AG04450 (cell line): ENCODE measurements at regions of chr12 and their contacts with region 1.

Region 1: DNA sequence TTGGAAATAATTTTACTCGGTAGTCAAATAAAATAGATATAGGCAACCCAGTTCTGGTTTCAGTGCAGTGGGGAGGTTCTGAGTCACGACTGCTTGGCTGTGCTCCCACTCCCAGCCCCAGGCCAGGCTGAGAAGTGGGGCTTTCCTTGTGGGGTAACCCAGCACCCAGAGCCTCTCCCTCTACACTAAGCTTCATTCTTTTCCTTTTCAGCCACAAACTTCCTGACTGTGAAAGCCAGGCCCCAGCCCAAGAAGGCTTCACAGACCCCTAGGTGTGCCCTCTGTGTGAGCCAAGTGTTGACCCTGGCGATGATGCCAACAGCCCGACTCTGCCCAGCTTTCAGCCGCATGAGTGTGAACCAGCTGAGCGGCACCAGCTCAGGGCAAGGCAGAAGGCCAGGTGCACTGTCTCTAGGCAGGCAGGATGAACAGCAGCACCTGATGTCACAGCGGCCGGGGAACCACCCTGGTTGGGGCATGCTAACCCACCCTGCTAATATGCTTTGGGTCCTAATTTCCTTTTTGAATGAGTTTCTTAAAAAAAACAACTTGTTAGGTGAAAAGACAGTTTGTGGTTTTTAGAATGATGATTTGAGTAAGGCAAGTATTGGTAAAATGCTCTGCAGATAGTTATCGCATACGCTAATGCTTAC is 42.2 kb upstream of the ATP23 start:
- DNase-seq: peak; percentile 51
- H3K4me3 ChIP-seq: no peak overlapping the region
- H3K27ac ChIP-seq: peak overlapping the region; percentile 92
- H3K27me3 ChIP-seq: no peaks in the 10 kb centered on the region
- CTCF ChIP-seq: no peak

Region 2: DNA sequence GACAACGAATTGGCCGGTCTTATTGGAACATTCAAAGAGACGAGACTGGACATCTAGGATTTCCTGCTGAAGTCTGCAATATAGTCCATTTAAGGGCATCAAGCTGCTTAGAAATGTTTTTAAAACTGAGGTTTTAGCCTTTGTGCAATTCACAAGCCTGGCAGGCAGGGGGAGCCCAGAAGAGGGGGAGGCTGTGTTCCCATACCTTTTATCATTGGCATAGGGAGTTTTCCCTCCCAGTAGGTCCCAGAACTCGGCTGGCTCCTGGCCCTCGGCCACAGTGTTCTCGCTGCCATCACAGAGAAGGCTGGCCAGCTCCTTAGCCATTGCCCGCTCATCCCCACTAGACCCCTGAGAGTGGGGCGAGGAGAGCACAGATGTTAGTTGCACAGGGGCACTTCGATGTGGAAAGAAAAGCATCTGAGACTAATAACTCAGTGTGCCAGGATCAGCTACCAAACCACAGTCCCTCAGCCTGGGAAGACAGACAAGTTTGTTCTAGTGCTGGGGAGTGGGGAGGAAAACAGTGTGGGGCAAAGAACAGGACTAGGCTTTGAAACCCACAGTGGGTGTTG is 95.7 kb before region 1 on chr12:
- CTCF ChIA-PET with region 1: interaction called, 124 read pairs
- POLR2A ChIA-PET with region 1: interaction called, 3 read pairs
- DNase-seq: no peak
- H3K4me3 ChIP-seq: no peak overlapping the region
- H3K27ac ChIP-seq: no peak overlapping the region
- H3K27me3 ChIP-seq: no peaks in the 10 kb centered on the region
- CTCF ChIP-seq: peak; percentile 86

Region 3: GRCh38 chr12:57836442-57837375 is 62.4 kb before region 1 on chr12:
- CTCF ChIA-PET with region 1: interaction called, 44 read pairs
- POLR2A ChIA-PET with region 1: interaction called, 19 read pairs
- DNase-seq: peak; percentile 46
- H3K4me3 ChIP-seq: peak overlapping the region; percentile 45
- H3K27ac ChIP-seq: peak overlapping the region; percentile 48
- H3K27me3 ChIP-seq: no peaks in the 10 kb centered on the region
- CTCF ChIP-seq: no peak

Region 4: DNA sequence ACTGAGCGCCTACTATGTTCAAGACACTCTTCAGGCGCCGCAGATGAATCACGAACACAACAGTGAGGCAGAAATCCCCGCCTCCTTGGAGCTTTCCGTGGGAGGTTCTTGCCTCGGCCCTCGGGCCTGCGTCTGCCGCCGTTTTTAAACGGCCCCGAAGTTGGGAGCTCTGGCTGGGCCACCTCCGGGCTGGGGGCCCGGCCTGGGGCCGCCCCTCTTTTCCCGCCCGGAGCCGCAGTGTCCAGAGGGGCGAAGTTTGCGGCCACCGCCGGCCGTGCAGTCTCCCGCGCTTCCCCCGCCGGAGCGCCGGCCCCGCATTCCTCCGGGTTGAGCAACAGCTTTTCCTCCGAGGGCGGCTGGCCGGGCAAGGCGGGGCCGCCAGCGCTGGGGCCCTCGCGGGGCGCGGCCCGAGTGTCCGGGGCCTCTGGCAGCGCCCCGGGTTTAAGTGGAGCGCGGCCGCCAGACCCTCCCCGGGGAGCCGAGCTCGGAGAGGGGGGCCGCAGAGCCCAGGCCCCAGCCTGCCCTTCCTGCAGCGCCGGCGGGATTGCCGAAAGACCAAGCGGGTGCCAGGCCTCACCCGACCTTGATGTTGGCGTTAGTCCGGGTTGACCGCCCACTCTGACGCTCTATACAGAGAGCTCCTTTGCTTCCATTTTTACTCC is 33.9 kb before region 1 on chr12:
- CTCF ChIA-PET with region 1: interaction called, 9 read pairs
- POLR2A ChIA-PET with region 1: interaction called, 63 read pairs
- DNase-seq: no peak
- H3K4me3 ChIP-seq: peak overlapping the region; percentile 55
- H3K27ac ChIP-seq: peak overlapping the region; percentile 90
- H3K27me3 ChIP-seq: no peaks in the 10 kb centered on the region
- CTCF ChIP-seq: no peak

Region 5: DNA sequence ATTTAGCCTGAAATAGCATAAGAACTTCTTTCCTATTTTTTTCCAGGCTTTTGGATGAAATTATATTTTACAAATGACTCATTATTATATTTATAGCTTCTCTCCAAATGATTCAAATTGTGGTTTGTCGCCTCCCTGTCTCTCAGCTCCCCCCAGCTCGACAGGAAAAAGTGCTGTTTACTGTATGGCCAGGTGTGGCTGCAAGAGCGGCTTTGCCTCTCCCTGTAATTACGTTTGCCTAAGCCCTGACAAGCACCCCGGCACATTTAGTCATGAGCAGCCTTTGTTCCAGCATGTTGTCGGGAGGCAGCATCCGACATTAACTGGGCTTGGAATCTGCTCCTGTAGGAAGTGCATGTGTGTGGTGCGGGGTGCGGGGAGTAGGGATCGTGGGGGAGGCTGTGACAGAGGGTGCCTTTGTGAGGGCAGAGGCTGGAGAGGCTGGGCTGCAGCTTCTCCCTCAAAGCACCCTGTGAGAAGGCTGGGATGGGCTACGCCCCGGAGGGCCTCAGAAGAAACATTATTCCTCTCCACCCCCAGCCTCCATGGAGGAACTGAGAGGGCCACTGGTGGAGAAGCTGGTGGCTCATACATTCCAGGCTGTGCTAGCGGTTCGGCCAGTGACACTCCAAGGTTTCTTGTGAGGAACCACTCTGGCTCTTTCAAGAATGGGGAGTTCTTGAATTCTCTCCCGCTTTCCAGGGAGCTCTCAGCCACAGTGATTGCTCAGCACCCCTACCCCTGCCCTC is 10.6 kb before region 1 on chr12:
- CTCF ChIA-PET with region 1: interaction called, 5 read pairs
- POLR2A ChIA-PET with region 1: interaction called, 12 read pairs
- DNase-seq: no peak
- H3K4me3 ChIP-seq: peak overlapping the region; percentile 33
- H3K27ac ChIP-seq: peak overlapping the region; percentile 89
- H3K27me3 ChIP-seq: no peaks in the 10 kb centered on the region
- CTCF ChIP-seq: no peak